Colonic mucosa (tissue), 4 donors: ENCODE measurements at regions of chr5 and their contacts with region 1.

Region 1: DNA sequence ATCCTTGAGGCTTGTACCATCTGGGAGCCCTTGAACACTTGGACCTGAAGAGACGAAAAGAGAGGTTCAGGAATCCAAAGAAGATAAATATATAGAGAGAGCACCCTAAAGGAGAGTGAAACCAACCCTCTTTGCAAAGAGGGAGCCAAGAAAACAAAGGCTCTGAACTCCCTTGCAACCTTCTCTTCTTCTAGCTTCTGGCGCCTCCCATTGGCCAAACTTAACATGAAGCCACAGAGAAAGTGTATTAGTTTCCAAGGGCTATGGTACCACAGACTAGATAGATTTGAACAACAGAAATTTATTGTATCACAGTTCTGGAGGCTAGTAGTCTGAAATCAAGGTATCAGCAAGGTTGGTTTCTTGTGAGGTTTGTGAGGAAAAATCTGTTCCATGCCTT is 175.1 kb downstream of the HCN1 start:
- DNase-seq: peak; percentile 67
- H3K4me3 ChIP-seq: no peak overlapping the region
- H3K27ac ChIP-seq: no peak overlapping the region
- H3K4me1 ChIP-seq: no peaks in the 10 kb centered on the region
- H3K27me3 ChIP-seq: no peaks in the 10 kb centered on the region
- CTCF ChIP-seq: peak; percentile 39

Region 2: DNA sequence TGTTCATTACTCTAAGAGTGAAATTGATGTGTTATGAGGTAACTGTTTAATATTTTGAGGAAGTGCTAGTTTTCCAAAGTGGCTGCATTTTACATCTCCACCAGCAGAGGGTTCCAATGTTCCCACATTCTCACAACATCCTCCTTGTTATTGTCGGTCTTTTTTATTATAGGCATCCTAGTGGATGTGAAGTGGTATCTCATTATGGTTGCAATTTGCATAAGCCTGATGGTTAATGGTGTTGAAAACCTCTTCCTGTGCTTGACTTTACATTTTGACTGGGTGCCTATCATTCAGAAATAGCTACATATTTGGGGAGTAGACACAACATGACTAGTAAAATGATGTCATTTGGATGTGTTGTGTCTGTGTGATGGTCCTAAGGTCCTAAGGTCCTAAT is 568.7 kb before region 1 on chr5:
- intact Hi-C with region 1: loop called (anchors 10 kb)
- DNase-seq: no peak
- H3K4me3 ChIP-seq: no peak overlapping the region
- H3K27ac ChIP-seq: no peak overlapping the region
- H3K4me1 ChIP-seq: no peaks in the 10 kb centered on the region
- H3K27me3 ChIP-seq: no peaks in the 10 kb centered on the region
- CTCF ChIP-seq: peak; percentile 40